CD14-positive monocyte (primary cell): ENCODE measurements at regions of chr9 and their contacts with region 1.

Region 1: GRCh38 chr9:613771-614347 is 227.6 kb upstream of the DMRT1 start:
- DNase-seq: peak; percentile 78 to 90 (median 82)
- H3K4me3 ChIP-seq: no peak overlapping the region
- H3K4me3 Mint-ChIP-seq: no peak overlapping the region
- H3K27ac ChIP-seq: peak overlapping the region; percentile 7 to 22
- H3K27ac Mint-ChIP-seq: peak overlapping the region; percentile 36 to 78 (median 72)
- H3K4me1 ChIP-seq: peaks cover 3 to 15% of the 10 kb centered on the region in 2 donors
- H3K4me1 Mint-ChIP-seq: peaks cover 15% of the 10 kb centered on the region
- H3K27me3 ChIP-seq: no peaks in the 10 kb centered on the region
- H3K27me3 Mint-ChIP-seq: peaks cover 0 to 2% (median 0%) of the 10 kb centered on the region in 3 donors
- CTCF ChIP-seq: peak; percentile 88

Region 2: GRCh38 chr9:763692-764524 is 150.0 kb after region 1 on chr9:
- intact Hi-C with region 1: loop called (anchors 5 kb)
- DNase-seq: peak; percentile 39 to 68 (median 49)
- H3K4me3 ChIP-seq: no peak overlapping the region
- H3K4me3 Mint-ChIP-seq: peak overlapping the region in 1 of 2 donors; percentile 59
- H3K27ac ChIP-seq: no peak overlapping the region
- H3K27ac Mint-ChIP-seq: no peak overlapping the region
- H3K4me1 ChIP-seq: peaks cover 3 to 4% of the 10 kb centered on the region in 2 donors
- H3K4me1 Mint-ChIP-seq: peaks cover 11% of the 10 kb centered on the region
- H3K27me3 ChIP-seq: no peaks in the 10 kb centered on the region
- H3K27me3 Mint-ChIP-seq: peaks cover 1 to 7% (median 2%) of the 10 kb centered on the region in 3 donors
- CTCF ChIP-seq: peak; percentile 77

Region 3: DNA sequence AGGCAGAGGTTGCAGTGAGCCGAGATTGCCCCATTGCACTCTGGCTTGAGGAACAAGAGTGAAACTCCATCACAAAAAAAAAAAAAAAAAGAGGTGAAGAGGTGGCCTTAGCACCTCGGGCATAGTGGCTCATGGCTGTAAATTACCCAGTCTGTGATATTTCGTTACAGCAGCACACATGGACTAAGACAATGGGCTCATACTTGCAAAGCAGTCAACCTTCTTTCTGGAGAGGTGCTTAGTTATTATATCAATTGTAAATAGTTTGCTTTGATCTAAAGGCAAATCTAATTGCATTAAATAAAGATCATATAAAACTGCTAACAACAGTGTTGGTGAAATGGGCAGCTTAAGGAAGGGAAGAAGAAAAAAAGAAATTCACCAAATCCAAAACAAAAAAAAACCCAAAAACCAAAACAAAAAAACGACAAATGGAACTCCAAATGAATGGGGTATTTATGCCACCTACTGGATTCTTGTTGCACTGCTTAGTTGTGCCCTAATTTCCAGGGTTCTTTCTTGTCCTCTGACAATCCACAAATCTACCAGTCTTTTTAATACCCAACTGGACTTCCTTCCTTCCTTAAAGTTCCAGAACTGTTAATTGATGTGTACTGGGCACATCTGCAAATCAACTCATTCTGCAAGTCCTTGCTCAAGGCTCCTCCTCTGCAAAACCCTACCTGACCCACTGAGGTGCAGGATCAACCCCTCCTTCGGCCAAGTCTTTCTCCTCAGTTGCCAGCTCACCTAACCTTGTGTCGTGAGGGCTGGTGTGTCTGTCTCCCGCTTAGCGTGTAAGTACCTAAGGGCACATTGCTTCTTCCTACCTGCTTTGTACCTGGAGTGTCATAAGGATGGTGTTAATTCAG is 192.7 kb after region 1 on chr9:
- intact Hi-C with region 1: loop called (anchors 2 to 5 kb)
- DNase-seq: peak in 2 of 3 donors; percentile 16 to 19
- H3K4me3 ChIP-seq: no peak overlapping the region
- H3K4me3 Mint-ChIP-seq: no peak overlapping the region
- H3K27ac ChIP-seq: no peak overlapping the region
- H3K27ac Mint-ChIP-seq: peak overlapping the region in 1 of 7 donors; percentile 50
- H3K4me1 ChIP-seq: no peaks in the 10 kb centered on the region
- H3K4me1 Mint-ChIP-seq: no peaks in the 10 kb centered on the region
- H3K27me3 ChIP-seq: no peaks in the 10 kb centered on the region
- H3K27me3 Mint-ChIP-seq: peaks cover 0 to 2% (median 1%) of the 10 kb centered on the region in 3 donors
- CTCF ChIP-seq: peak; percentile 63

Region 4: DNA sequence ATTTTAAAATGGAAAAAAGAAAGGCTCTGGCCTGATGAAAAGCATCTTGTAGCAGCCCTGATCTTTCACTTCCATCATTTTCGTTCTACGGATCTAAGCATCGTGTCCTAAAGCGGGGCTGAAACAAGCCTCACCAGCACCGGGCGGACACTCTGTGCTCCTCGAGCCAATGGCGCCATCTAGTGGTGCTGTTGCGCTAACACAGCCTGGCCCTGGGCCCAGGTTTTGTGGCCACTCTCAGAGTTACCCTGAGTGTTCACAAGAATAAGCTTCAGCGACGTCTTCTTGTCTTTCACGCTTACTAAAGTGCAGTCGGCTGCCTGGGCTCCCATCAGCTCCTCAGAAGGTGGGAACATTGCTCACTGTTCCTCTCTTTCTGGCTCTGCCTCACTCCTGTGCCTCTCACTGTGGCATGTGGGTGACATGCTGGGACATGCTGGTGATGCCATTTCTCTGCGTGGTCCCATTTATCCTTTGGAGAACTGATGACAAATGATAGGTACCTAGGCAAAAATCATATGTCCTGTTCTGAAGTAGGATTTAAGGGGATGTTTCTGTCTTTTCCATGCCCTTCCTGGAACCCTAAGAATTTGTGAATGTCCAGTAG is 395.3 kb after region 1 on chr9:
- intact Hi-C with region 1: loop called (anchors 5 to 10 kb)
- DNase-seq: peak; percentile 69 to 81 (median 79)
- H3K4me3 ChIP-seq: no peak overlapping the region
- H3K4me3 Mint-ChIP-seq: no peak overlapping the region
- H3K27ac ChIP-seq: no peak overlapping the region
- H3K27ac Mint-ChIP-seq: peak overlapping the region in 2 of 7 donors; percentile 38 to 71
- H3K4me1 ChIP-seq: peaks cover 33 to 41% of the 10 kb centered on the region in 2 donors
- H3K4me1 Mint-ChIP-seq: peaks cover 22% of the 10 kb centered on the region
- H3K27me3 ChIP-seq: peaks cover 0 to 1% of the 10 kb centered on the region in 2 donors
- H3K27me3 Mint-ChIP-seq: peaks cover 2 to 8% (median 2%) of the 10 kb centered on the region in 3 donors
- CTCF ChIP-seq: peak; percentile 99